ENCODE measurements at regions of chr1 and their contacts with region 1.

Region 1: DNA sequence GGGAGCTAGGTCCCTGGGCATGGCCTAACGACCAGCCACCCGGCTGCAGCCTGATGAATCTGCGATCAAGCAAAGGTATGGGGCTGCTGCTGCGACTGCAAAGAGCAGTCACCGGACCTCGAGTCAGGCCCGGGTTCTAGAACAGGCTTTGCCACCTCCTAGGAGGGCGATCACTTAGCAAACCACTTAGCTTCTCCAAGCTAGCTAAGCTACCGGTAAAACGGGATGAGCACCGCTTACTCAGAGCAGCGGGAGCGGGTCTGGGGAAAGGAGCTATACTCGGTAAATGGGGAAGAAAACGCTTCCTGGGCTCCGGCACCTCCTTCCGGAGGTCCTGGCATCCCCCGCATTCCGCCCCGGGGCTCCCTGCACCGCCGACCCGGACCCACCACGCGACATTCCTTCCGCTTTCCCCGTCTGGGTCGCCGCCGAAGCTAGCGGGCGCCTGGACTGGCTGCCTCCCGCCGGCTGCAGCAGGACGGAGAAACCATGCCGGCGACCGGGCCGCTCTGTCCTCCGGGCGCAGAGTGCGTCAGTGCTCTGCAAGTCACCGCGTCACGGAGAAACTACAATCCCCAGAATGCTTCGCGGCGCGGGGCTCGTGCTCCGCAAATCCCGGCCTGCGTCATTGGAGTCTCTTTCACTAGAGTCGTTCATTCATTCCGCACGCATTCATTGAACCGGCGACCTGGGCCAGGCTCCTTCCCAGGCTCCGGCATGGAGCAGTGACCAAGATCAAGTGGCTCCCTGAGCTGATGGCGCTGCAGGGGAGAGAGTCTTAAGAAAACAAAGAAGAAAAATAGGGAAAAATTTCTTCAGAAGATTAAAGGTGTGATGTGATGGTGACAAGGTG is at the start of gene LSM10:
- DNase-seq: peak; percentile 91
- H3K4me3 Mint-ChIP-seq: peak within 1 kb of the TSS; percentile 92
- H3K27ac Mint-ChIP-seq: peak within 1 kb of the TSS; percentile 96
- H3K4me1 Mint-ChIP-seq: peaks cover 38% of the 10 kb centered on the region
- H3K27me3 Mint-ChIP-seq: no peaks in the 10 kb centered on the region
- total RNA-seq, gene LSM10: 39.3 to 39.4 TPM

Region 2: DNA sequence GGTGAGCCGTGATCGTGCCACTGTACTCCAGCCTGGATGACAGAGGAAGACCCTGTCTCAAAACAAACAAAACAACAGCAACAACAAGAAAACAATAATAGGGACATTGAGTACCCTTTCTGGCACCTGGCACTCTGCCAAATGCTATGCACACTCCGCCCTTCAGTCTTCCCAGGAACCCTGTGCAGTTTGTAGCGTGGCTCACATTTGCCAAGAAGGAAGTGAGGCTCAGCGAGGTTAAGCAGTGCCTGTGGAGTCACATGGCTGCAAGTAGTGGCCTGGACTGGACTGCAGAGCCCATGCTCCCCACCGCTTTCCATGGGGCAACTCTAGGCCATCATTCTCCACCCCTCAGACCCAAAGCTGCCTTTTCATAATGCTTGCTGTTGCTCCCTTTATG is 68.9 kb before region 1 on chr1:
- CTCF ChIA-PET with region 1: no interaction called
- POLR2A ChIA-PET with region 1: no interaction called
- DNase-seq: no peak
- H3K4me3 Mint-ChIP-seq: no peak overlapping the region
- H3K27ac Mint-ChIP-seq: no peak overlapping the region
- H3K4me1 Mint-ChIP-seq: peaks cover 42% of the 10 kb centered on the region
- H3K27me3 Mint-ChIP-seq: peaks cover 36% of the 10 kb centered on the region

Region 3: GRCh38 chr1:36411674-36412520 is 14.3 kb after region 1 on chr1:
- CTCF ChIA-PET with region 1: interaction called, 16 read pairs
- POLR2A ChIA-PET with region 1: interaction called, 3 read pairs
- DNase-seq: peak; percentile 88
- H3K4me3 Mint-ChIP-seq: peak overlapping the region; percentile 42
- H3K27ac Mint-ChIP-seq: peak overlapping the region; percentile 95
- H3K4me1 Mint-ChIP-seq: peaks cover 29% of the 10 kb centered on the region
- H3K27me3 Mint-ChIP-seq: no peaks in the 10 kb centered on the region